ENCODE measurements at regions of chr15 and their contacts with region 1.

Region 1: DNA sequence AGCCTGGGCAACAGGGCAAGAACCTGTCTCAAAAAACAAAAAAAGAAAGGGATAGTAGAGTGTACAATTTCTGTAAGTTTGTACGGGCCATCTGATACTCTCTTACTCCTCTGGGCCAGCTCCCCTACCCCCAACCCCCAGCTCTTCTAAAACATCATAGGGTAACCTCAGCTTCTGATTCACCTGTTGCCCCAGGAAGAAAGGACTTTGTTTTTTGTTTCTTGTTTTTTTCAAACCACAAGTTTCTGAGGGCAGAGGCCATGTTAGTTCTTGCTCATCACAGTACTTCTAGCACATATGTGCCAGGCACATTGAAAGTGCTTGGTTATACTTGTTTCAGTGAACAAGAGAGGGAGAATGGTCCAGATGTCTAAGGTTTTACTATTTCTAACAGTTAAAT is 20.2 kb downstream of the ATOSA start:
- DNase-seq: peak in 1 of 2 donors; percentile 45
- ATAC-seq: peak in 1 of 3 donors; percentile 24
- H3K4me3 ChIP-seq: no peak overlapping the region
- H3K4me3 Mint-ChIP-seq: no peak overlapping the region
- H3K27ac ChIP-seq: no peak overlapping the region
- H3K27ac Mint-ChIP-seq: peak overlapping the region in 1 of 2 donors; percentile 31
- H3K4me1 ChIP-seq: no peaks in the 10 kb centered on the region
- H3K4me1 Mint-ChIP-seq: peaks cover 32 to 39% of the 10 kb centered on the region in 2 donors
- H3K27me3 ChIP-seq: no peaks in the 10 kb centered on the region
- H3K27me3 Mint-ChIP-seq: no peaks in the 10 kb centered on the region
- CTCF ChIP-seq: no peak

Region 2: DNA sequence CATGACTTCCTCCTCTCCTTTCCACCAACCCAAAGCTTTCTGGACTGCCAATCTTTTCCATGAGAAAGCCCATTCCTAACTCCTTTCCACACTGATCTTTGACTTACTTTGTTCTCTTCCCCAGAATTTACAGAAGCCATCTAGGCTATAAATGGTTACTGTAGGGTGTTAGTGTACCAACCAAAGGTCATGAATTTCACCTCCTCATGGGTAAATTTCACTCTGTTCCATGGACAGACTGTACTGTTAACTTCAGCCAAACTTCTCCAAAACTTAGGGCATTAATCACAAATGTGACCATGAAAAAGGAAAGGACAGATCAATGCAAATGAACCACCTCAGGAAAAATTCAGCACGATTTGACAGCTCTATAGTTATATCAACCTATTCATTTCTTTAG is 34.7 kb before region 1 on chr15:
- intact Hi-C with region 1: loop called (anchors 5 kb)
- DNase-seq: no peak
- ATAC-seq: no peak
- H3K4me3 ChIP-seq: no peak overlapping the region
- H3K4me3 Mint-ChIP-seq: no peak overlapping the region
- H3K27ac ChIP-seq: no peak overlapping the region
- H3K27ac Mint-ChIP-seq: no peak overlapping the region
- H3K4me1 ChIP-seq: no peaks in the 10 kb centered on the region
- H3K4me1 Mint-ChIP-seq: peaks cover 11 to 21% of the 10 kb centered on the region in 2 donors
- H3K27me3 ChIP-seq: no peaks in the 10 kb centered on the region
- H3K27me3 Mint-ChIP-seq: no peaks in the 10 kb centered on the region
- CTCF ChIP-seq: no peak

Region 3: GRCh38 chr15:52765785-52766184 is 106.8 kb after region 1 on chr15:
- intact Hi-C with region 1: no loop called
- DNase-seq: no peak
- ATAC-seq: no peak
- H3K4me3 ChIP-seq: no peak overlapping the region
- H3K4me3 Mint-ChIP-seq: no peak overlapping the region
- H3K27ac ChIP-seq: no peak overlapping the region
- H3K27ac Mint-ChIP-seq: no peak overlapping the region
- H3K4me1 ChIP-seq: no peaks in the 10 kb centered on the region
- H3K4me1 Mint-ChIP-seq: no peaks in the 10 kb centered on the region
- H3K27me3 ChIP-seq: peaks cover 2% of the 10 kb centered on the region
- H3K27me3 Mint-ChIP-seq: peaks cover 34 to 47% of the 10 kb centered on the region in 2 donors
- CTCF ChIP-seq: no peak